Dorsolateral prefrontal cortex (tissue), 120 donors: ENCODE measurements at regions of chr1 and their contacts with region 1.

Region 1: DNA sequence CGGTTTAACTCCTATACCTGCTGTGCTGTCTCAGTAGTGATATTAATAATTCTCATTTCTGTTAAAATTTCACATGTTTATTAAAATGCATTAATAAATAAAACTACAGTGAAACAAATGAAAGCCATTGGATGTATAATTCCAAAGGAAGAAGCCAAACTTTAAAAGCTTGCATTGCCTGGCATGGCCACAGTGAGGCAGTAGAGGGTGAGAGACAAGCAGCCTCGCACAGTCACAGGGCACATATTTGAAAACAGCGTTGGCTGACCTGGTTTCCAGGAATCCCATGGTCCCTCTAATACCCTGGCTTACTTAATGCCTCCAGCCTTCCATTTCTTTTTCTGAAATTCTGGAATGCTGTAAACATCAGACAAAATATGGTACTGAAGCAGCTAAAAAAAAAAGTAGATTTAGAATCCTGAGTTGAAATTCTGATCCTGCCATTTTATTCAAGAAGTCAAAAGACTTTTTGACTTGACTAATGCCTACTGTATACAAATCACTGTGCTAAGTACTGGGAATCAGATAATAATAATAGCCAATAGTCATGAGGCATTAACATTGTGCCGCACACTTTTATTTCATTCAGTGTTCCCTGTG is 6.7 kb upstream of the RNASEL start:
- DNase-seq: peak in 7 of 10 donors; percentile 43 to 82 (median 70)
- H3K4me3 ChIP-seq: no peak overlapping the region
- H3K27ac ChIP-seq: no peak overlapping the region
- H3K27me3 ChIP-seq: no peaks in the 10 kb centered on the region
- CTCF ChIP-seq: peak; percentile 69 to 92 (median 85)

Region 2: DNA sequence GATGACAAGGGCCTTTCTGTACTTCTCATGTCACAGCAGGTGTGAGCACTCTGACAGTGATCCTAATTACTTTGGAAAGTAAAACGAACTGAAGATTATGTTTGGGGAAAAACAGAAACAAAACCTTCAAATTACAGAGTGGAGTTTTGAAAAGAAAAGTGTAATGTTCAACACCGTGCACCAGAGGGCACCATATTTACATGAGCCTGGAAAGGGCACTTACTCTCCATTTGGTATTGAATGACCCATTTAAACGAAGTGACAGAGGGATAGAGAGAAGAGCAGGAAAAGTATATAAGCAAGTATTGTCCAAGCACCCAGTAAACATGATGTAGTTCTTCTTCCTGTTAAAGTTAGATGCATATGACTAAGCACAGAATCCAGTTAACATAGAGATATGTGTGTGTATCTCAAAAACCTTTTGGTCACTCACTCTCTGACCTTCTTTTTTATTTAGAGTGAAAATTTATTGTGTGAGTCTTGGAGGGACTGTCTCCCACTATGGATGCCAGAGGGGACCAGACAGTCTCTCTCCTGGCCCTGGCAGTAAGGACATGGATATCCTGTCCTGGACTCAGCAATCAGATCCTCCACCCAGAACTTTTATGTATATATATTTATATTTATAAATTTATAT is 149.6 kb before region 1 on chr1:
- intact Hi-C with region 1: no loop called
- DNase-seq: no peak
- H3K4me3 ChIP-seq: no peak overlapping the region
- H3K27ac ChIP-seq: no peak overlapping the region
- H3K27me3 ChIP-seq: no peaks in the 10 kb centered on the region
- CTCF ChIP-seq: peak in 54 of 56 donors; percentile 38 to 71 (median 58)

Region 3: GRCh38 chr1:182781841-182782586 is 186.3 kb after region 1 on chr1:
- intact Hi-C with region 1: loop called in 1 of 2 experiments (anchors 1 kb)
- DNase-seq: peak; percentile 20 to 79 (median 66)
- H3K4me3 ChIP-seq: no peak overlapping the region
- H3K27ac ChIP-seq: no peak overlapping the region
- H3K27me3 ChIP-seq: peaks cover 0 to 3% (median 0%) of the 10 kb centered on the region in 45 donors
- CTCF ChIP-seq: peak; percentile 25 to 88 (median 74)